Motor neuron (in vitro differentiated cells): ENCODE measurements at regions of chr2 and their contacts with region 1.

Region 1: GRCh38 chr2:72745679-72746368 is 80.0 kb downstream of the EXOC6B start:
- ATAC-seq: peak in 4 of 8 experiments; percentile 39 to 72 (median 57)
- H3K4me3 ChIP-seq: no peak overlapping the region
- H3K27ac ChIP-seq: no peak overlapping the region
- H3K4me1 ChIP-seq: no peaks in the 10 kb centered on the region

Region 2: DNA sequence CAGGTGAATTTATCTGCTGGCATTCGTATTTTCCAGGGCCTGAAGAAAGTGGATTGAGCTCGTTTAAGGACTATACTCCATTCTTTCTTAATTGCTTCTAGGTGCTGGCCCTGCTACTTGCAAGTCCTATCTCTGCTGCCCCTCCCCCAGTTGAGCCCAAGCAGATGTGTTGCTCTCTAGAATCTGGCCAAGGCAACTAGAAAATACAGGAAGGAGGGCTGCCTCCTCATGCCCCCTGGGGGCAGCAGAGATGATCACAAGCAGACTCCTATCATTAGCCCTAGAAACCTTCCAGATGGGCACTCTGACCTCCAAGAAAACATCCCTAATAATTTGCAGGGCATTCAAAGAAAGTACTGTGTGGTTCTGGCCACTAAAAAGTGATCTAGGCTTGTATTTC is 525.7 kb before region 1 on chr2:
- in situ Hi-C with region 1: loop called in 1 of 9 experiments (anchors 25 kb)
- ATAC-seq: peak in 1 of 8 experiments; percentile 40
- H3K4me3 ChIP-seq: no peak overlapping the region
- H3K27ac ChIP-seq: no peak overlapping the region
- H3K4me1 ChIP-seq: no peaks in the 10 kb centered on the region

Region 3: DNA sequence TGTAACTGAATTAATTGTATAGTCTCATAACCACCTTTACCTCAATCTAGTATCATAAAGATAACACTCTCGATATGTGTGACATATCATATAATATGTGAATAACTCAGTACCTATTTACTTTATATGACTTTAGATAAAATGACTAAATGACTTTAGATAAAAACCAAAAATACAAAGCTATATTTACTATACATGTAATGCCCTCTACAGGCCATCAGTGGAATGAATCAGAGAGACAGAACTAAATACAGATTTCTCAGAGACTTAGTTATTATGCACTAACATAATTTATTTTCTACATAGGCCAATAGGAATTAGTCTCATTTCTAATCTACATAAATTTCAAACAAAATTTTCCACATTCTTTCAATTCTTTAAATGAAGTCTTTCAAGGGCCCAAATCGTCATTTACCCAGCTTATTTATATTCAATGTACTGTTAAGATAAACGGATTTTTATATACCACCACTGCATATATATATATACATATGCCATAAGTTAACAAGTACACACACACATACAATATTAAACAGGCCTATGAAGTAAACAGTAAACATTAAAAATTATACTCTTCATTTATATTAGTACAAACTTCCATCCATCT is 139.9 kb before region 1 on chr2:
- in situ Hi-C with region 1: loop called in 1 of 9 experiments (anchors 25 kb)
- ATAC-seq: no peak
- H3K4me3 ChIP-seq: no peak overlapping the region
- H3K27ac ChIP-seq: no peak overlapping the region
- H3K4me1 ChIP-seq: peaks cover 5 to 9% of the 10 kb centered on the region in 2 donors